ENCODE measurements at regions of chr10 and their contacts with region 1.

Region 1: GRCh38 chr10:86763404-86763803 is 7.0 kb downstream of the BMPR1A start:
- DNase-seq: no peak
- ATAC-seq: peak; percentile 61
- H3K4me3 ChIP-seq: no peak overlapping the region
- H3K27ac ChIP-seq: no peak overlapping the region
- H3K4me1 ChIP-seq: peaks cover 6 to 12% of the 10 kb centered on the region in 2 donors
- H3K27me3 ChIP-seq: no peaks in the 10 kb centered on the region

Region 2: GRCh38 chr10:86439544-86439943 is 323.9 kb before region 1 on chr10:
- intact Hi-C with region 1: no loop called
- DNase-seq: peak in 1 of 2 donors; percentile 90
- ATAC-seq: peak; percentile 44
- H3K4me3 ChIP-seq: no peak overlapping the region
- H3K27ac ChIP-seq: no peak overlapping the region
- H3K4me1 ChIP-seq: no peaks in the 10 kb centered on the region
- H3K27me3 ChIP-seq: no peaks in the 10 kb centered on the region

Region 3: DNA sequence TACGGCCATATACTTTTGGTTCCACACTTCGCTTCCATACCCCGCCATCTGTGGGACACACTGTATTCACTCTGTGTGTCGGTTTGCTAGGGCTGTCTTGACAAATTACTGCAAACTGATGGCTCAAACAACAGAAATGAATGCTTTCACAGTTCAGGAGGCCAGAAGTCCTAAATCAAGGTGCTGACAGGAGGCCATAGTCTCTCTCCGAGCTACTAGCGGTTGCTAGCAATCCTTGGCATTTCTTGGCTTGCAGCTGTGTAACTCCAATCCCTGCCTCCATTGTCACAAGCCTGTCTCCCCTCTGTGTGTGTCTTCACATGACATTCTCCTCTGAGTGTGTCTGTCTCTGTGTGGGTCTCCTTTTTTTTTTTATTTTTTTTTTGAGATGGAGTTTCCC is 35.9 kb before region 1 on chr10:
- intact Hi-C with region 1: loop called in 1 of 2 experiments (anchors 5 kb)
- DNase-seq: no peak
- ATAC-seq: no peak
- H3K4me3 ChIP-seq: no peak overlapping the region
- H3K27ac ChIP-seq: peak overlapping the region in 1 of 2 donors; percentile 23
- H3K4me1 ChIP-seq: peaks cover 0 to 3% of the 10 kb centered on the region in 2 donors
- H3K27me3 ChIP-seq: no peaks in the 10 kb centered on the region

Region 4: DNA sequence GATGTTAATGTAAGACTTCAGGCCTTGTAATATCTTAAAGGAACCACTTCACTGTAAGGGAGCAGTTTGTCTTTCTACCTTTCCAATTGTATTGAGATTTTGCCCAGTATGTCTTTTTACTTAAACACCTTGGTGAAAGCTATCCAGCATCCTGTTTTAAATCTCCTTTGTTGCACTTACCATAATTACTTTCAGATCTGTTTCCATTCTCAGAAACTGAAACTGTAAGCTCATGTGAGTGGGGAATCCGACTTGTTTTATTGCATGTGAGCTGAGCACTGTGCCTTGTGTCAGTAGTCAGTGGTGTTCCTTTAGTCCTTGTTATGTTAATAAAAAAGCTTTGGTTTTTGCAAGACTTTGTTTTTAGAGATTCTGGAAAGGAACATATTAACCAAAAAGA is 35.2 kb after region 1 on chr10:
- intact Hi-C with region 1: loop called in 1 of 2 experiments (anchors 5 kb)
- DNase-seq: no peak
- ATAC-seq: peak; percentile 39
- H3K4me3 ChIP-seq: peak overlapping the region in 1 of 2 donors; percentile 34
- H3K27ac ChIP-seq: no peak overlapping the region
- H3K4me1 ChIP-seq: peaks cover 0 to 9% of the 10 kb centered on the region in 2 donors
- H3K27me3 ChIP-seq: no peaks in the 10 kb centered on the region

Region 5: GRCh38 chr10:86936661-86937501 is 173.5 kb after region 1 on chr10:
- intact Hi-C with region 1: no loop called
- DNase-seq: no peak
- ATAC-seq: no peak
- H3K4me3 ChIP-seq: no peak overlapping the region
- H3K27ac ChIP-seq: peak overlapping the region in 1 of 2 donors; percentile 60
- H3K4me1 ChIP-seq: no peaks in the 10 kb centered on the region
- H3K27me3 ChIP-seq: no peaks in the 10 kb centered on the region

Measured in aorta (tissue), 5 donors.